A549 (cell line): ENCODE measurements at regions of chr2 and their contacts with region 1.

Region 1: GRCh38 chr2:118046634-118047210 is 32.9 kb upstream of the CCDC93 start:
- DNase-seq: peak; percentile 18 to 48
- ATAC-seq: peak; percentile 63 to 71; a peak in 3 of 6 replicates
- H3K4me3 ChIP-seq: peak overlapping the region; percentile 31; the same call in 1 of the 3 replicates
- H3K27ac ChIP-seq: no peak overlapping the region
- H3K4me1 ChIP-seq: peaks cover 19% of the 10 kb centered on the region; the same call in 2 of the 3 replicates
- CTCF ChIP-seq: peak; percentile 80
- EP300 ChIP-seq: no peak
- POLR2A ChIP-seq: no peak
- RAD21 ChIP-seq: peak; percentile 80 to 83

Region 2: DNA sequence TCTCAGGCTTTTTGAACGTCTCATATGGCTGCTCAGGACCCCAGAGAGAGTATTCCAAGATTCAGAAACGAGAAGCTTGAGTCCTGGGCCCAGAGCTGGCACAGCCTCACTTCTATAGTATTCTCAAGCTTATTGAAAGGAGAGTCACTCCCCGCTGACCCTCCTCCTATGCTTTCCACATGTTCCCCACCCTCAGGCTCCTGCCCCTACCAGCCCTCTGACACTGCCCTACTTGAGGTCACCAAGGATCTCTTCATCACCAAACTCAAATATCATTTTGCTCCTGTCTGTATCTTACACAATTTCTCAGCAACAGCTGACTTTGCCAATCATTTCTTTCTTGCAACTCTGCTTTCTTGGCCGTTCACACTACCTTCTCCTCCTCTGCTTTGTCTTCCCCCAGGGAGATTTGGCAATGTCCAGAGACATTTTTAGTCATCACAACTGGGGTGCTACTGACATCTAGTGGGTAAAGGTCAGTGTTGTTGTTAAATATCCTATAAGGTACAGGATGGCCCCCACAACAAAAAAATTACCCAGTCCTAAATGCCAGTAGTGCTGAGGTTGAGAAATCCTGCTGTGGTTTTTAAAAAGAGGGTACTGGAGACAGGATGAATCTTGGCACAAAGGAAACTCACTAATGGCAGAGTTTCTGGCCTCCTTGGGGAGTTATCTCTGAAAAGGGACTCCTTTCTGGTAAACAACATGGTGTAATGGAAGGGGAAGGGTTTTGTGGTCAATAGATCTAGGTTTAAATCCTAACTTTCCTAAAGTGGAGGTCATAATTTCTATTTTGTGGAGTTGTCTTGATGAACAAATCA is 14.6 kb after region 1 on chr2:
- CTCF ChIA-PET with region 1: interaction called, 63 read pairs
- POLR2A ChIA-PET with region 1: no interaction called
- DNase-seq: peak; percentile 10 to 27
- ATAC-seq: peak; percentile 77 to 81; a peak in 5 of 6 replicates
- H3K4me3 ChIP-seq: no peak overlapping the region
- H3K27ac ChIP-seq: no peak overlapping the region
- H3K4me1 ChIP-seq: no peaks in the 10 kb centered on the region
- CTCF ChIP-seq: peak; percentile 47
- EP300 ChIP-seq: no peak
- POLR2A ChIP-seq: no peak
- RAD21 ChIP-seq: peak; percentile 46 to 53